Psoas muscle (tissue), 8 donors: ENCODE measurements at regions of chr10 and their contacts with region 1.

Region 1: GRCh38 chr10:110547139-110547761 is 20.2 kb upstream of the SMC3 start:
- DNase-seq: no peak
- ATAC-seq: peak in 3 of 4 donors; percentile 57 to 78 (median 59)
- H3K4me3 ChIP-seq: no peak overlapping the region
- H3K27ac ChIP-seq: no peak overlapping the region
- H3K4me1 ChIP-seq: no peaks in the 10 kb centered on the region
- H3K27me3 ChIP-seq: peaks cover 0 to 13% (median under 1%) of the 10 kb centered on the region in 3 donors
- CTCF ChIP-seq: peak; percentile 84

Region 2: DNA sequence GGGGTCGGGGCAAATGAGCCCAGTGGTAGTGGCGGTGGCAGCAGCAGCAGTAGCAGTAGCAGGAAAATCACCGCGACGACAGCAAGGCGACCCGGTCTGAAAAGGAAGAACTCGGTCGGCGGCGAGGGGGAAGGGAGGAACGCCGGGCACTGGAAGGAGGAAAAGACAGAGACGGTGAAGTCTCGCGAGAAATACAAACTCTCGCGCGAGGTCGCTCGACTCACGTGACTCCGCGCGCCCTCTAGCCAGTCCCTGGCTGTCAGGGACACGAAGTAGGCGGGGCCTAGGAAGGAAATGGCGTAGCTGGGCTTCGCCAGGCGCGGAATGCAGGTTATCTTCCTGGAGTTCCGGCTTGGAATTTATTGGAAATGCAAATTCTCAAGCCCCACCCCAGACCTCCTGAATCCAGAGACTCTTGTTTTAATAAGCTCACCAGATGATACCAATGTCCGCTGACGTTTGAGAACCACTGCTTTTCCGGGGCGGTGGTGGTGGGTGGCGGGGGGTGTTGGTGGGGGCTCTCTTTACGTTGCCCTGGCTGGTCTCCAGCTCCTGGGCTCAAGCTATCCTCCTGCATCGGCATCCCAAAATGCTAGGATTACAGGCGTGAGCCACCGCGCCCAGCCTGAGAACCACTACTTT is 242.3 kb before region 1 on chr10 and contains the start of gene SMNDC1:
- intact Hi-C with region 1: loop called (anchors 2 kb)
- DNase-seq: peak; percentile 97 to 98
- ATAC-seq: peak; percentile 94 to 98 (median 95)
- H3K4me3 ChIP-seq: peak within 1 kb of the TSS; percentile 74
- H3K27ac ChIP-seq: peak within 1 kb of the TSS; percentile 88
- H3K4me1 ChIP-seq: peaks cover 51% of the 10 kb centered on the region
- H3K27me3 ChIP-seq: no peaks in the 10 kb centered on the region
- CTCF ChIP-seq: no peak
- total RNA-seq, gene SMNDC1: 24.4 to 38.0 (median 29.2) TPM

Region 3: DNA sequence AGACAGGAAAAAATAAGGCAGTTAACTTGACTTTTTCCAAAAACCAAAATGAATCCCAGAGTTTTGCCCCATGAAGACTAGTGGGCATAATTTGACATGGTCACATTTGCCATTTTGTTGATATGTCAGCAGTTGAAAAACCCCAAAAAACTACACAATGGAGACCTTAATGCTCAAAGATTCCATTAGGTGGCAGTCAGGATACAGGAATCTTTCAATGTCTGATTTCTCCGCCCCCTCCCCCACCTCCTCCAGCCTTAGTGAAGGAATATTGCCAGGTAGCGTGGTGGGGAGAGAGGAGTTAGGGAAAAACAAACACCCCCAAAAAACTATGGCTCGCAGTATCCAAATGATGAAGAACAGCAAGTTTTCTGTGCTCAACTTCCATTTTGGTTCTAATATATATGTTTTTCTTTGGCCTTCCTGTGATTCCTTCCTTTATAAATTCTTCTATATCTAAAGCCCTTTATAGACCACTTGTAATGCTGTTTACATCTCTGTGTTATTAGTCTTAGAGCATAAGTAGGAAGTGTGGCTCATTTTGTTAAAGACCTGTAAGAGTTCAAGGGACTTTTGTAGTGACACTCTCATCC is 235.8 kb before region 1 on chr10:
- intact Hi-C with region 1: loop called (anchors 2 kb)
- DNase-seq: no peak
- ATAC-seq: peak; percentile 51 to 84 (median 68)
- H3K4me3 ChIP-seq: no peak overlapping the region
- H3K27ac ChIP-seq: no peak overlapping the region
- H3K4me1 ChIP-seq: peaks cover under 1% of the 10 kb centered on the region
- H3K27me3 ChIP-seq: no peaks in the 10 kb centered on the region
- CTCF ChIP-seq: peak; percentile 62

Region 4: GRCh38 chr10:110354322-110354766 is 192.9 kb before region 1 on chr10:
- intact Hi-C with region 1: loop called in 1 of 2 experiments (anchors 5 kb)
- DNase-seq: peak; percentile 68 to 78
- ATAC-seq: peak; percentile 59 to 77 (median 72)
- H3K4me3 ChIP-seq: no peak overlapping the region
- H3K27ac ChIP-seq: no peak overlapping the region
- H3K4me1 ChIP-seq: no peaks in the 10 kb centered on the region
- H3K27me3 ChIP-seq: peaks cover 0 to 12% (median 0%) of the 10 kb centered on the region in 3 donors
- CTCF ChIP-seq: peak; percentile 54

Region 5: DNA sequence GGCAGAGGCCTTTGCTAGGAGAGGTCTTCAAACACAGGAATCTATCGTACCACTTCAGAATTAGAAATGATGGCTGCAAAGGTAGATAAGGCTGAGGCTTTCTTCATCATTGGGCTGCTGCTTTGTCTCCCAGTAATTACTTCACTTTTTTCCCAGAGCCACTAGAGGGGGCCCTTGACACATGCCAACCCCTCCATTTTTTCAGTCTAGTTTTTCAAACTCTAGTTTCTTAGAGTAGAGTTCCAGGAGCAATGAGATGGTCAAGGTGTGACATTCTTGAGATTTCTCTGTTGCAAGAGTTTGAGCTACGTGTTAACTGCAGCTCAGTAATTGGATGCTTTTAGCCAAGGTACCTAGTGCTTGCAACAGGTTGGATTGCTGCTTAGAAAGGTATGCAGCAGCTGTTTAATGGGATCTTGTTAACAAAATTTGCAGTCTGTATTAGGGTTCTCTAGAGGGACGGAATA is 63.1 kb after region 1 on chr10:
- intact Hi-C with region 1: no loop called
- DNase-seq: no peak
- ATAC-seq: peak; percentile 77 to 85 (median 80)
- H3K4me3 ChIP-seq: no peak overlapping the region
- H3K27ac ChIP-seq: peak overlapping the region; percentile 72
- H3K4me1 ChIP-seq: peaks cover 22% of the 10 kb centered on the region
- H3K27me3 ChIP-seq: no peaks in the 10 kb centered on the region
- CTCF ChIP-seq: peak; percentile 86

Region 6: DNA sequence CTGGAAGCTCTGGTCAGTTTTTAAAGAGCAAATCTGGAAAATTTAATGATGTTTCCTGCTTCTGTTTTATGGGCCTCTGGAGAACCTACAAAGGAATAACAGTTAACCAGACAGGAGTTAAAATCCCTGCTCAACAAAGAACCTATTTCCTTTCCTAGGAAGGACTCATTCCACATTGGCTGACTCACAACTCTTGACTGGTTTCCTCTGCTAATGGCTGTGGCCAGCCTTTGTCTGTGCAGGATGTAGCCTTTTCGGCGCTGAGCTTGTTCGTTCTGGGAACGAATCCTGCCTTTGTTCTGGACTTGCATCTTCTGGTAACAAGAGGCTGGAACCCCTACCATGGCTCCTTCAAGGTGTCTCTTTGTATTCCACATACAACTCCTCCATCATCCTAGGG is 211.6 kb after region 1 on chr10:
- intact Hi-C with region 1: no loop called
- DNase-seq: no peak
- ATAC-seq: peak in 1 of 4 donors; percentile 24
- H3K4me3 ChIP-seq: no peak overlapping the region
- H3K27ac ChIP-seq: peak overlapping the region; percentile 63
- H3K4me1 ChIP-seq: peaks cover 65% of the 10 kb centered on the region
- H3K27me3 ChIP-seq: no peaks in the 10 kb centered on the region
- CTCF ChIP-seq: no peak

Region 7: GRCh38 chr10:110794808-110795207 is 247.6 kb after region 1 on chr10:
- intact Hi-C with region 1: no loop called
- DNase-seq: no peak
- ATAC-seq: peak; percentile 30 to 57 (median 45)
- H3K4me3 ChIP-seq: no peak overlapping the region
- H3K27ac ChIP-seq: no peak overlapping the region
- H3K4me1 ChIP-seq: no peaks in the 10 kb centered on the region
- H3K27me3 ChIP-seq: no peaks in the 10 kb centered on the region
- CTCF ChIP-seq: no peak